AG04450 (cell line): ENCODE measurements at regions of chr17 and their contacts with region 1.

Region 1: GRCh38 chr17:50213026-50214022 is 11.9 kb upstream of the COL1A1 start:
- DNase-seq: no peak
- H3K4me3 ChIP-seq: no peak overlapping the region
- H3K27ac ChIP-seq: no peak overlapping the region
- H3K27me3 ChIP-seq: no peaks in the 10 kb centered on the region
- CTCF ChIP-seq: no peak

Region 2: GRCh38 chr17:50111734-50112655 is 101.3 kb before region 1 on chr17:
- CTCF ChIA-PET with region 1: no interaction called
- POLR2A ChIA-PET with region 1: no interaction called
- DNase-seq: no peak
- H3K4me3 ChIP-seq: no peak overlapping the region
- H3K27ac ChIP-seq: no peak overlapping the region
- H3K27me3 ChIP-seq: no peaks in the 10 kb centered on the region
- CTCF ChIP-seq: no peak

Region 3: DNA sequence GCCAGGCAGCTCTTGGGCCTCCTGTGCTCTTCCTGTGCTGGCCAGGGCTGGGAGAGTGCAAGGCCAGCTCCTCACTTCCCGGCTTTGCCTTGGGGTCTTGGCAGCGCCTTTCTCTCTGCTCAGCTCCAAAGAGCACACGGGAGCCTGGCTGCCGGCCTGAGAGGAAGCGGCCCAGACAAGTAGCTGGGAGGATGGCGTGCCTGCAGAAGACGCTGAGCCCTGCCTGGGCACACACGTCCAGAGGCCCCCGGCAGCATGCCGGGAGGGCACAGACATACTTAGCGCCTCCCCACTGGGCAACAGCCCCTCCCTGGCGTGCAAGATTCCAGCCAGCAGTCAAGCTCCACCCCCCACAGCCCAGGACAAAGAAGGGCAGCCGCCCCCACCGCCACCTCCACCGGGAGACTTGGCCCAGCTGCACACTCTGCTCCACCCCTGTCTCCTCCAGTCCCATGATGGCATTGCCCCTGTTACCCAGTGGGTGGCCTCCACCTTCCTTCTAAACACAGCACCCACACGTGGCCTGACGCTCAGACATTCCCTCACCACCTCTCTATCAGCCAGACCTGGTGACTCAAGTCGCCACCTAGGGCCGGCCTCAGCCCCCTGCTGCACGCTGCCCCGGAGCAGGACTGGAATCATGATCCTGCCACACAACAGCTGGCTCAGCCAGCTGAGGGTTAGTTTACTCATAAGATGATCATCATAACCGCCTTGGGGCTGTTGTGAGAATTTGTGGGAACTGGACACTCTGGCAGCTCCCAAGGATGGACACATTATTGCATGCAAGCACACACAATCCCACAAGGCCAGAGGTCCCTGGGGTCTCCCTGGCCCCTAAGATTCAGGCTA is 35.1 kb before region 1 on chr17:
- CTCF ChIA-PET with region 1: no interaction called
- POLR2A ChIA-PET with region 1: interaction called, 25 read pairs
- DNase-seq: peak; percentile 92
- H3K4me3 ChIP-seq: 0 out of 2 replicates have a peak overlapping the region, but pooled peaks have one; percentile 4
- H3K27ac ChIP-seq: peak overlapping the region; percentile 98
- H3K27me3 ChIP-seq: no peaks in the 10 kb centered on the region
- CTCF ChIP-seq: peak; percentile 59

Region 4: DNA sequence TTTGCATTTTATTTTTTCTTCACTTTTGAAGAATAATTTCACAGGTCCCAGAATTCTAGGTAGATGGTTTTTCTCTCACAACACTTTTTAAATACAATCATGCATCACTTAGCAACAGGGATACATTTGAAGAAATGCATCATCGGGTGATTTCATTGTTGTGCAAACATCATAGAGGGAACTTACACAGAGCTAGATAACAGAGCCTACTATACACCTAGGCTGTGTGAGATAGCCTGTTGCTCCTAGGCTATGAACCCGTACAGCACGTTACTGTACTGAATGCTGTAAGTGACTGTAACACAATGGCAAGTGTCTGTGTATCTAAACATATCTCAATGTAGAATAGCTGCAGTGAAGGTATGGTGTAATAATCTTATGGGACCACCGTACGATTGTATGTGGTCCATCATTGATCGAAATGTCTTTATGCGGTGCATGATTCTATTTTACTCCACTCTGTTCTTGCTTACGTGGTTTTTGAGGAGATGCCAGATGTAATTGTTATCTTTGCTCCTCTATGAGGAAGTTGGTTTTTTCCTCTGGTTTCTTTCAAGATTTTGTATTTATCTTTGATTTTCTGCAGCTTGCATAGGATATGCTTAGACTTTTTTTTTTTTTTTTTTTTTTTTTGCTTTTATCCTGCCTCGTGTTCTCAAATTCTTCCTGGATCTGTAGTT is 25.4 kb after region 1 on chr17:
- CTCF ChIA-PET with region 1: no interaction called
- POLR2A ChIA-PET with region 1: interaction called, 21 read pairs
- DNase-seq: no peak
- H3K4me3 ChIP-seq: no peak overlapping the region
- H3K27ac ChIP-seq: no peak overlapping the region
- H3K27me3 ChIP-seq: no peaks in the 10 kb centered on the region
- CTCF ChIP-seq: no peak